Right ventricle myocardium inferior (tissue), 1 donor: ENCODE measurements at regions of chr10 and their contacts with region 1.

Region 1: DNA sequence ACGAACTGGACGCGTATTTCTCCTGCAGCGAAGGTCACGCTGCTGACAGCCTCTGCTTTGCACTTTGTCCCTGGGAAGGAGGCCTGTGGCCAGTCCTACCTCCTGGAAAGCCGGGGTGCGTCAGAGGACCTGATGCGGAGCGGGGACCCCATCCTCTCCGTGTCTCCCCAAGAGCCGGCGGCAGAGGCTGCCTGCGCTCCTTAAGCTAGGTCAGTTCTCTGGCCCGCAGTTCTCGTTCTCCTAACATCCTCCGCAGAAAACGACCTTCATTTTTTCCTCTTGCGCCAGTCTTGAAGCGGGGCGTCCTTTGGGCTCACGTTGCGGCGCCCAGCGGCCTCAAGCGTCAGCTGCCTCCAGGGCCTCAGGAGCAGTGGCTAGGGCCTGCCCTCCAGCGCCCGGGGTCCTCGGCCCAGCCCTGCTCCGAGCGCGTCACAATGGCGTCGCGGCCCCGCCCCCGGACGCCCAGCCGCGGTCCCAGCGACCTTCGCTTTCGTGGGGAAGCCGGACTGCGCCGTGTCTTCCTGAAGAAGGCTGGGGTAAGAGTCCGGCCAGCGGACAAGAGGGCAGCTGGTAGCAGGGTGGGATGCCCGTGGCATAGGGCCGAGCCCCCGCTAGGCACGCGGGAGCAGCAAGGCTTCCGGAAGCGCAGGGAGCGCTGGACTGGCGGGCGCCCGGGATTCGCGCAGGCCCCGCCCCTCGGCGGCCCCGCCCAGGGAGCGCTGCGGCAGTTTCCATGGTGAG is at the start of gene ZNF487:
- DNase-seq: peak; percentile 96
- ATAC-seq: peak; percentile 99
- total RNA-seq, gene ZNF487: 2.7 TPM

Region 2: DNA sequence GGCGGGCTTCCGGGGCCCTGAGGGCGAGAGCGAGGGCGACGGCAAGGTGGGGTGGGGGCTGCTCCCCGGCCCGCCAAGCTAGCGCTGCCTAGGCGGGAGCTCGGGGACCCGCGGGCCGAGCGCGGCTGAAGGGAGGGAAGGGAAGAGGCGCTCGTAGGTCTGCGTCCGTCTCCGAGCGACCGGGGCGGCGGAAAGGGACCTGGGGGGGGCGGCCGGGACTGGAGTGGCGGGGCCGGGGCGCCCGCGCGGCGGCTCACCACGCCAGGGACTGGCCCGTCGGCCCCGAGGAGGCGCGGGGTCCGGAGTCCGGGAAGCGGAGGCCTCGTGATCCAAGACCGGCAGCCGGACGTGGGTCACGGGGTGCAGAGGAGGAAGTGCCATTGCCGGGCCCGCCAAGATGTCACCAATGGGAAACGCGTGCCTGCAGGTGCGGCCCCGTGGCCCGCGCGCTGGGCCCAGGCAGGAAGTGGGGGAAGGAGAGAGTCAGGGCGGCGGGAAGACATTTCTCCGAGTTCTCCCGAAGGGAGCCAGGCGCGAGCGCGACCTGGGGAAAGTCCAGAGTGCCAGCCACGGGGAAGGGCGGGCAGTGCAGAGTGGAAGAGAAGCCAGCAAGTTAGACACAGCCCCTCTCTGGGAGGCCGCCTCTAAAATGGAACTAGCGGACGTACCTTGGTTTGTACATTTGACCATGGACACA is 39.5 kb before region 1 on chr10:
- intact Hi-C with region 1: loop called (anchors 5 kb)
- DNase-seq: peak; percentile 95
- ATAC-seq: peak; percentile 87

Region 3: DNA sequence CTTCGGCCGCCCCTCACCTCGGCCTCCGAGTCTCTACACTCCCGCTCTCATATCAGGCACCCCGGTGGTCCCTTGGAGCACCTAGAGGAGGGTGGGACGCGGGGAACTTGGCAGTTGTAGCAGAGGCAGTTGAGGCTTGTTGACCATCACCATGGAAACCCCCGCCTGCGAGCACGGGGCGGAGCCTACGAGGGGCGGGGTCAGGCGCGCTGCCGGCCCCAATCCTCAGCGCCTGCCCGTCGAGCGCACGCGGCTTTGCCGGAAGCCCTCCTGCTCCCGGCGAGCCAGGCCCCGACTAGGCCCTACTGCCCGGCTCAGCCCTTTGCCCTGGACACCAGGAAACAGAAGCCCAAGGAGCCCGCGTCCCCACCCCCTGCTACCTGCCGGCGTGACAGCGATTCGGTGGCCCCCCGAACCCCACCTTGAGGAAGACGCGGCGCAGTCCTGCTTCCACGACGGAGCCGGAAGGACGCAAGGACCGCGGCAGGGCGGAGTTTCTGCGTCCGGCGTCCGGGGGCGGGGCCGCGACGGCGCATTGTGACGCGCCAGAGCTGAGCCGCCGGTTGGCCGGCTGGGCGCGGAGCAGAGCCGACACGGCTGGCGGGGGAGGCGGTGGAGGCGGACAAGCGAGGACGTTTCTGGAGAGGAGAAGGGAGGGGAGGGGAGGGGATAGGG is 27.7 kb before region 1 on chr10 and contains the start of gene HNRNPF:
- intact Hi-C with region 1: loop called (anchors 1 kb)
- DNase-seq: peak; percentile 97
- ATAC-seq: peak; percentile 93
- total RNA-seq, gene HNRNPF: 87.6 TPM

Region 4: GRCh38 chr10:43479275-43479674 is 42.7 kb after region 1 on chr10:
- intact Hi-C with region 1: no loop called
- DNase-seq: no peak
- ATAC-seq: no peak